ENCODE measurements at regions of chr11 and their contacts with region 1.

Region 1: DNA sequence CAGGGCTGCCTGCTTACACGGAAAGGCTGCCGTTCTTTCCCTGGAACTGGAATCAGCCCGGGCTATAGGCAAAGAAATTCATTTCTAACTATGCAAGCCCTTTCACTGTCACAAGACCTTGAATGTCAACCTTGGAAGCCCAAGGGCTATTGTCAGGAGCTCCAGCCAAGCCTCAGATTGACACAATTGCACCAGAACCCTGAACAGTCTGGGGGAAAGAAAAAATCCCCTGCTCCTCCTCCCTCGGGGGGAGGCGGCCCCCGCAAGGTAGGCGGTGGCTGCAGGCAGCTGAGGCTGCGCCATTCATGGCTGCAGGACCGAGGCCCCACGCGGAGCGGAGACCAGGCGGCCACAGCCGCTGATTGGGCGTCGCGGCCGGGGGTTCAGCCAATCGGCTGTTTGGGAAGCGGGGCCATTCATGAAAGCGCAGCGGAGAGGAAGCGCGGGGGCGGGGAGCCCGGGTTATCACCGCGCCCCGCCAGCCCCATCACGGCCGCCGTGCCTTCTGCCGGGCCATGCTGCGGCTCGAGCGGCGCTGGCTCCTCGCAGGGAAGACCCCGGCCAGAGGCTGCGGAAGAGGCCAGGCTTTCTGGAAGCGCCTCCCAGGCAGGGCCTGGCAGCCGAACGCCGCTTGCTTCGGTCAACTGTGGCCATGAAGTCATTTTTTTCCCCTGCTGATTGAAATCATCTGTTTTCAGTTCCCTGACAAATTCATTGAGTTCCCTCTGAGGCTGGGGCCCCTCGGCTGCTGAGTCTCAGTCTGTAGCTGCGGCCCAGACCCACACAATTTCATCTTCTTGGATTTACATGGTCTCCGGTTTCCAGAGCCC is 38.1 kb upstream of the LINC01488 start:
- DNase-seq: peak; percentile 95
- ATAC-seq: peak; percentile 91 to 94

Region 2: DNA sequence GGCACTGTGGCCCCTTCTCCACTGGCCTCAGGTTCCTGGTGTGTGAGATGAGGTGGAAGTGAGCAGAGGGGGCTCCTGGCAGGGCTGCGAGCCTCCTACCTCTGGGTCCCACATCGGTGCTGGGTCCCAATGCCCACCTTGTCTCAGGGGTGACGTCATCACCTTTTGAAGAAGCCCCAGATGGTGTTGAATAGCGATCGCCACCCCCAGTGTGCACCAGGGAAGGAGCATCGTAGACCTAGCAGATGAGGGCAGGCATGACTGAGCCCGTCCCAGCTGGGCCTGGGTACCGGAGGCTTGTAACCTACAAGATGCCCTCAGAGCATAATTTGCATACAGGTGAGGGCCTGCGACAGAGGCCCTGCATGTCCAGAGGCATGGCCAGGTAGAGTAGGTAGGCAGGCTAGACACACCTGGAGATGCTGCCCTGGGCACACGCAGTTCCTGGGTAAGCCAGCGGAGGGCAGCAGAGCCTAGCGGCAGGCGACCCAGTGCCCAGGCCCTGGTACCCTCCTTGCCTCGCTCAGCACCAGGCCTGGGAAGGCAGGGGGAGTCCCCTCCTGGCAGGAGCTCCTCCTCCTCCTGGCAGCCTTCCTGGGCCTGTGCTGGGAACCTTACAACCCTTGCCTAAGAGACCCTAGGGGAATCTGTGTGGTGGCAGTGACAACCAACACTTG is 342.1 kb before region 1 on chr11:
- intact Hi-C with region 1: no loop called
- DNase-seq: peak; percentile 83
- ATAC-seq: peak; percentile 89 to 91

Region 3: GRCh38 chr11:69122642-69123431 is 320.5 kb before region 1 on chr11:
- intact Hi-C with region 1: loop called in 1 of 2 experiments (anchors 10 kb)
- DNase-seq: peak; percentile 74
- ATAC-seq: peak; percentile 69 to 91

Region 4: GRCh38 chr11:69497221-69497787 is 54.0 kb after region 1 on chr11:
- intact Hi-C with region 1: loop called in 1 of 2 experiments (anchors 2 kb)
- DNase-seq: peak; percentile 86
- ATAC-seq: peak; percentile 95 to 97